A549 (cell line): ENCODE measurements at regions of chr2 and their contacts with region 1.

Region 1: DNA sequence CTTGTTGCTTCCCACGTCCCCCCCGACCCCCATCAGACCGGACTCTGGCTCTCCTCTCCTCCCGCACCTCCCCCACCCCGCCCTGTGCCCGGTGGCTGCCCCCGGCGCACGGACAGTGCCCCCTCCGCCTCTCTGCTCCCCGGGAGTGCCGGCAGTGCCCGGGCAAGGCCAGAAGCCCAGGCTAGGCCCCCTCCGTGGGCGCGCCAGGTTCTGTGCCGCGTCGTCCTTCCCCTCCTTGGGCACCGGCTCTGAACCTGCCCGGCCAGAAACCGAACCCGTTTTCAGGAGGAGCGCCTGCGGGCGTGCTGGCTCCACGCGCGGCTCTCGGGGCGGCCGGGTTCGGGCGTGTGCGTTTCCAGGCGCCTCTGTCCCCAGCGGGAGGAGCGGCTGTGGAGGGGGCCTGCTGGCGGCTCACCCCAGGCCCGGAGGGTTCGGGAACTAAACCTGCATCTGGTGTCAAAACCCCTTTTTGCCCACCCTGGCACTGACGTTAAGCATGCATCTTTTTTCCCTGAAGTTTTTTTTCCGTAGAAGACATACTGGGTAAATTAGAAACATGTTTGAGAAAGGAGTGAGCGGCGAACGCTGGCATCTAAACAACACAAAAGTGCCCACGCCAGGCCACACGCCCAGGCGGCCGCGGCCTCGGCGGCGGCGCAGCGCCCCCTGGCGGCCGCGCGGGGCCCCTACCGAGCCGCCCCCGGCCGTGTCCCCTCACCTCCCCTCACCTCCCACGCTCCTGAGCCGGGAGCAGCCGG is 123.9 kb upstream of the SLC1A4 start:
- DNase-seq: peak; percentile 69 to 76
- ATAC-seq: peak; percentile 86 to 95
- H3K4me3 ChIP-seq: peak overlapping the region; percentile 62
- H3K27ac ChIP-seq: peak overlapping the region; percentile 85 to 92
- H3K4me1 ChIP-seq: peaks cover 20% of the 10 kb centered on the region
- CTCF ChIP-seq: peak; percentile 99
- EP300 ChIP-seq: no peak
- POLR2A ChIP-seq: no peak
- RAD21 ChIP-seq: peak; percentile 69 to 99

Region 2: DNA sequence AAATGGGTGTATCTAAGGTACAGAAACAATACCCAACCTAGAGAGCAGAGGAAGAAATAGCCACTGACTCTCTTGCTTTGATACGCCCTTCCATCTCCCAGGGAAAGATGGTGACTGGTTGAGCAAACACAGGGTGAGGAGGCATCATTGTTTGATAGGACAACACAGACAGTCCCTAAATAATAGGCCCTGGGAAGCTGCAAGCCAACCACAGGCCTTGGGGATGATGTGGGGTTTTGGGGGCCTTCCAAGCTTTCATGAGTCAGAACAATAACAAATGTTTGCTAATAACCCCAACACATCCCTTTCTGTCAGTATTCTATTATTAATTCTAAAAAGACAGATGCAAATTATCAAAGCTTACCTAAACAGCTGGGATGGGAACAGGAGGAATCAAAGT is 401.5 kb before region 1 on chr2:
- CTCF ChIA-PET with region 1: no interaction called
- POLR2A ChIA-PET with region 1: no interaction called
- DNase-seq: no peak
- ATAC-seq: peak; percentile 33 to 53; a peak in 4 of 6 replicates
- H3K4me3 ChIP-seq: no peak overlapping the region
- H3K27ac ChIP-seq: no peak overlapping the region
- H3K4me1 ChIP-seq: no peaks in the 10 kb centered on the region
- CTCF ChIP-seq: no peak
- EP300 ChIP-seq: no peak
- POLR2A ChIP-seq: no peak
- RAD21 ChIP-seq: no peak

Region 3: DNA sequence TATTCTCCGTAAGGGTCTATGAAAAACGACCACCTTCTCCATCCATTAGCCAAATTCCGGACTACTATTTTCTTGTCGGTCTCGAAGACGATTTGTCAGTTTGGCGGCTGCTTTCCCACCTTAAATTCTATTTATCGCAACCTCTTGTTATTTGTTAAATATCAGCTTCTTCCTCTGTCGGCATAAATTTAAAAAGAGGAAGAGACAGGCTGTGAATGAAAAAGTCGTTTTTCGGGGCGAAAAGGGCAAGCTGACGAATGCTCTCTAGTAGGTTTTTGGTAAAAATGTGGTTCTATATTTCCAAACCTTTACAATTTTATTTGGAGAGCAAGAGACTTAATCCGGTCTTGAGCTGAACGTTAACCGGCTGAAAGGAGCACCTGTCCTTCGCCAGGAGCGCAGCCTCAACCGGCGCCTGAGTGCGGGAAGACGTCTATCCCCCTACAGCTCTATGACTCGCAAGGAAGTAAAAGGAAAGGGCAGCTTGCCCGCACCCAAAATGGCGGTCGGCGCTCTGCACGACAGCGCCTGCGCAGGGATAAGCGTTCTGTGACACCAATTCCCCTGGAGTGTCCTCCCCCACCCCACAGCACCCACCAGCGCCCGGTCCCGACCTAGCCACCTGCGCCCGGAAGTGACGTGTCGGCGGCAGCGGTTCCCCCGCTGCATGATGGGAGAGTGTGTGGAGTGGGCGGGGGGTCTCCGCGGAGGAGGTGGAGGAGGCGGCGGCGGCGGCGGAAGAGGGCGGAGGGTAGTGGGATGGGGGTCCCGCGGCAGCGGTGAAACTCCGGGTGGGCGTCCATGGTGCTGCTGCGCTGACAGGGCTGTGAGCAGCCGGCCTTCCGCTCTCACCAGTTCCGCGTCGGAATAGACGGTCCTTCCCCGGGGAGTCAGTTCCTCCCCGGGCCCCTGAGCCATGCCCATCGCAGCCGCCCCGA is 341.3 kb before region 1 on chr2 and contains the start of gene AFTPH:
- CTCF ChIA-PET with region 1: interaction called, 14 read pairs
- POLR2A ChIA-PET with region 1: interaction called, 9 read pairs
- DNase-seq: peak; percentile 98 to 99
- ATAC-seq: peak; percentile 95 to 98
- H3K4me3 ChIP-seq: peak within 1 kb of the TSS; percentile 89
- H3K27ac ChIP-seq: peak within 1 kb of the TSS; percentile 86 to 96
- H3K4me1 ChIP-seq: peaks cover 15% of the 10 kb centered on the region; the same call in 2 of the 3 replicates
- CTCF ChIP-seq: no peak; the same call in 2 of the 3 replicates
- EP300 ChIP-seq: no peak
- POLR2A ChIP-seq: peak; percentile 61
- RAD21 ChIP-seq: no peak
- polyA plus RNA-seq, gene AFTPH: 51.4 and 56.6 TPM in 2 replicates

Region 4: DNA sequence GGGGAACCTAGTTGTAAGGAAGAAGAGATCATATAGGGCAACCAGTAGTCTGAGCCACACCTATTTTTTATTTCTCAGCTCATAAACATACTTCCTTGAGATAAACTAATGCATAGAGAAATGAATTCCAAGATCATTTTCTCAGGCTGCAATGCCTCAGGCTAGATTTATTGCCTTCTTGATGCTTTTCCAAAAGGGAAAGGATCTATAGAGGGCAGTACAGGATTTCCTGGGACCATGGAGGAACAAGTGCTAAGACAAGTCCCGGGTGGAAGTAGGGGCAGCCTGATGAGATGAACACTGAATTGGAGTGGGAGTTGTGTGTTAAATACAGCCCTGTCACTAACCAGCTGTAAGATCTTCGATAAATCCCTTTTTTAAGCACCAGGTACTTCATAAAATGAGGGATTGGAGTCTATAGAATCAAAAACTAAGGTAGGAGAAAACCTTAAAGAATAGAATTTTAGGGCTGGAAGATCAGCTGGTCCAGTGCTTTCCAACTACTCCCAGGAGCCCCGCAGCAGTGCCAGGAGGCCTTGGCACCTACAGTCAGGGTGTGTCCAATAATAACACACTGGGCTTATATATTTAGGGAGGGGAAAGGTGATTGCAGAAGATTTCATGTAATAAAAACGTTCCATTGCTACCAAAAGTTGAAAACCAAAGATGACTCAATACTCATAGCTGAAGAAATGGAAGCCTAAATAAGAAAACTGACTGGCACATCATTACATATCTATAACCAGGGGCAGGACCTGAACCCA is 269.7 kb before region 1 on chr2:
- CTCF ChIA-PET with region 1: interaction called, 17 read pairs
- POLR2A ChIA-PET with region 1: no interaction called
- DNase-seq: peak in 1 of 2 experiments; percentile 38
- ATAC-seq: peak; percentile 43 to 72; a peak in 3 of 6 replicates
- H3K4me3 ChIP-seq: no peak overlapping the region
- H3K27ac ChIP-seq: no peak overlapping the region
- H3K4me1 ChIP-seq: peaks cover 21% of the 10 kb centered on the region; the same call in 1 of the 3 replicates
- CTCF ChIP-seq: peak; percentile 46
- EP300 ChIP-seq: no peak
- POLR2A ChIP-seq: no peak
- RAD21 ChIP-seq: peak; percentile 55 to 72

Region 5: GRCh38 chr2:64609227-64609941 is 255.9 kb before region 1 on chr2:
- CTCF ChIA-PET with region 1: interaction called, 34 read pairs
- POLR2A ChIA-PET with region 1: interaction called, 4 read pairs
- DNase-seq: peak; percentile 80 to 88
- ATAC-seq: peak; percentile 90
- H3K4me3 ChIP-seq: peak overlapping the region; percentile 55
- H3K27ac ChIP-seq: peak overlapping the region; percentile 85 to 97
- H3K4me1 ChIP-seq: 0 out of 3 replicates have a peak, but pooled peaks cover 4% of the 10 kb centered on the region
- CTCF ChIP-seq: peak; percentile 92
- EP300 ChIP-seq: no peak
- POLR2A ChIP-seq: peak; percentile 77; the same call in 1 of the 2 replicates
- RAD21 ChIP-seq: peak; percentile 6 to 65; a peak in 3 of 5 replicates

Region 6: GRCh38 chr2:64635976-64636911 is 229.0 kb before region 1 on chr2:
- CTCF ChIA-PET with region 1: interaction called, 11 read pairs
- POLR2A ChIA-PET with region 1: no interaction called
- DNase-seq: no peak
- ATAC-seq: no peak
- H3K4me3 ChIP-seq: no peak overlapping the region
- H3K27ac ChIP-seq: no peak overlapping the region
- H3K4me1 ChIP-seq: peaks cover 31% of the 10 kb centered on the region
- CTCF ChIP-seq: no peak
- EP300 ChIP-seq: no peak
- POLR2A ChIP-seq: no peak
- RAD21 ChIP-seq: no peak

Region 7: GRCh38 chr2:64879745-64880144 is 14.5 kb after region 1 on chr2:
- CTCF ChIA-PET with region 1: interaction called, 15 read pairs
- POLR2A ChIA-PET with region 1: no interaction called
- DNase-seq: no peak
- ATAC-seq: no peak
- H3K4me3 ChIP-seq: no peak overlapping the region
- H3K27ac ChIP-seq: no peak overlapping the region
- H3K4me1 ChIP-seq: peaks cover 15% of the 10 kb centered on the region
- CTCF ChIP-seq: no peak
- EP300 ChIP-seq: no peak
- POLR2A ChIP-seq: no peak
- RAD21 ChIP-seq: no peak

Region 8: DNA sequence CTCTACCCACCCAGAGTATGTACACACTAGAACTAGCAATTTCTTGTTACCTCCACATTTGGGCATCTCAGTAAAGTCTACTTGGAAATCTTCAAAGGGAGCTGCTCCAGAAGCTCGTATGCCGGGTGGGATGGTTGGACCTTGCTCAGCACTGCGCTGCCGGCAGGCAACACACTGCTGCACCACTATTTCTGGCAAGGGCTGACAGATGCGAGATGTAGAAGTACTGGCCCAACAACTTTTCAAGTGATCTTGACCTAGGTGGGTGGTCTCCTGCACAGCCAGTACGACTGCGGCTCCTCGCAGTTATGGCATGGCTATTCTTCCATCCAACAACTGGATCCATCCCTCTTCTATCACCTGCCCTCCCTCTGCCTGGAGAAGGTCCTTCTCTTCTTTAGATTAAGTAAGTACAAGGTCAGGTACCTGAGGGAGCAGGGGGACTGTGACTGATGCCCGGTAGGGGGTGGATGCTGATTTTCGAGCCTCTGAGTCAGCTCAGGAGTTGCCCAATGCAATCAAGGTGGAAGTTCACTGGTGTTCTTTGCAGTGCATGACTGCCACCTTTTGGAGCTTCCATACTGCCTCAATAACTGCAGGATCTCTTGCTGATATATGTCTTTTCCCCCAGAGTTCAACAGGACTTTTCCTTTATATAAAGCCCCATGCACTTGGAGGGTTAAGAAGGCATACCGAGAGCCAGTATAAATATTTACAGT is 23.5 kb after region 1 on chr2:
- CTCF ChIA-PET with region 1: interaction called, 12 read pairs
- POLR2A ChIA-PET with region 1: no interaction called
- DNase-seq: peak; percentile 83 to 85
- ATAC-seq: peak; percentile 94 to 97
- H3K4me3 ChIP-seq: no peak overlapping the region
- H3K27ac ChIP-seq: no peak overlapping the region
- H3K4me1 ChIP-seq: 0 out of 3 replicates have a peak, but pooled peaks cover 3% of the 10 kb centered on the region
- CTCF ChIP-seq: peak; percentile 80
- EP300 ChIP-seq: no peak
- POLR2A ChIP-seq: no peak
- RAD21 ChIP-seq: peak; percentile 90 to 91